Heart right ventricle (tissue), 16 donors: ENCODE measurements at regions of chr20 and their contacts with region 1.

Region 1: DNA sequence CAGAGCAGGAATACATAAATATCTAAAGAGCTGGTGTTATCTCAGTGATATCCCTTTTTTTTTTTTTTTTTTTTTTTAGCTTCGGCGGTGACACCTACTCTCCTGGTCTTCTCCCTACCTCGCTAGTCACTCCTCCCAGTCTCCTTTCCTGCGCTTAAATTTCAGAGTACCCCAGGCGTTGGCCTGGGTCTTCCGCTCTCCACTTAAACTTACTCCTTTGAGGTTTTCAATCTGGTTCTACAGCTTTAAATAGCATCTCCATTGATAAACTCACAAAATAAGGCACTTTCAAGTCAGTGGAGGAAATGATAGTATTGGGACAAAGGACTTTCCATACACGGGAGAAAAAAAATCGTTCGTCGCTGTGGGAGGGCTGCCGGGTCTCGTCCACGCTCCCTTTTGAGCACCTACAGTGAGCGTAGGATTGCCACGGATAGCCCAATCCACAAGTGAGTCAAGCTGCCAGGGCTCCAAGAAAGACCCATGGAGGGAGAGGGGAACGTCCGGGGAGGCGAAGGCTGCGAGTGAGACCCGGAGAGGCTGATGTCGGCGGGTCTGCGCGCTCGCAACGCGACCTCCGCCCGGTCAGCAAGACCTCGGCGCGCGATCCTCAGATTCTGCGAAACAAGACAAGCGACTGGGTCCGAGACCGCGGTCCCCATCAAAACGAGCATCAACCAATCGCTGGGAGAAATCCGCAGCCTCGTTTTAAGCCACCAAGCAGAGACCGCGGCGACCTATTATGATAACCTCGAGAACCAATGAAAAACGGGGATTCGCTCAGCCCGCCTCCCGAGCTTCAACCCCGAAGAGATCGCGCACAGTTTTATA is 672 bp upstream of the SRSF6 start:
- DNase-seq: peak; percentile 79 to 93
- ATAC-seq: peak; percentile 83 to 95 (median 90)
- H3K4me3 ChIP-seq: peak overlapping the region; percentile 73 to 99 (median 92)
- H3K27ac ChIP-seq: peak overlapping the region; percentile 97 to 100 (median 100)
- H3K4me1 ChIP-seq: peaks cover 2 to 41% (median 28%) of the 10 kb centered on the region in 9 donors
- H3K27me3 ChIP-seq: peaks cover 0 to 5% (median 0%) of the 10 kb centered on the region in 7 donors
- CTCF ChIP-seq: no peak

Region 2: DNA sequence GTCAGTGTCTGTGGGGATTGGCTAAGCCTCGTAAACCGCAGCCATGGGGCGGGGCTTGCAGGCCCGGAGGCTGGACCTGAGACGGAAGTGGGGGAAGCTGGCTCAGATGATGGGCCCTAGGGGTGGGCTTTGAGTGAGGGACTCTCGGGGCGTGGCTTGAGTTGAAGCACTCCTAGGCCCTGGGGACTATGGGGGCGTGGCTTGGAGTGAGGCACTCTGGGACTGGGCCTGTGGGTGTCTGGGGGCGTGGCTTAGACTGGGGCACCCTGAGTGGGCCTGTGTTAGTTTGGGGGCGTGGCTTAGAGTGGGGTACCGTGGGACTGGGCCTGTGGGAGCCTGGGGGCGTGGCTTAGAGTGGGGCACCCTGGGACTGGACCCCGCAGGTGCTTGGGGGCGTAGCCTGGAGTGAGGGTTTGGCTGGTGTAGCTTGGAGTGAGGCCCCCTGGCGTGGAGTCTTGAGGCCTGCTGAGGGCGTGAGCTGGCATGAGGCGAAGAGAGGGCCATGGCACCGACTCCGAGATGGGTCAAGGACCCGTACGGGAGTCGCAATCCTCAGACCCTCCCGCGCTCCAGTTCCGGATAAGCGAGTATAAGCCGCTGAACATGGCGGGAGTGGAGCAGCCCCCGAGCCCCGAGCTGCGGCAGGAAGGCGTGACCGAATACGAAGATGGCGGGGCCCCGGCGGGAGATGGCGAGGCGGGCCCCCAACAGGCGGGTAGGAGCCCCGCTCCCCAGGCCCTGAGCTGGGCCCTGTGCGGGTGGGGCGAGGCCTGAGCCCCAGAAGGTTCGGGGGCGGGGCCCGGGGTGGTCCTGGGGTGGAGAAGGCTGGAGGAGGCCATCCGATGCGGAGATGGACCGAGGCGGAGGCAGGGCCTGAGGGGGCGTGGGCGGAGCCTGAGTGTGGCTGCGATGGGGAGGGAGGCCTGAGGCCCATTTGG is 57.3 kb after region 1 on chr20:
- intact Hi-C with region 1: loop called in 2 of 10 experiments (anchors 5 to 10 kb)
- DNase-seq: peak; percentile 93 to 97
- ATAC-seq: peak; percentile 94 to 98 (median 96)
- H3K4me3 ChIP-seq: peak overlapping the region; percentile 3 to 73 (median 64)
- H3K27ac ChIP-seq: peak overlapping the region in 9 of 10 donors; percentile 36 to 78 (median 71)
- H3K4me1 ChIP-seq: peaks cover 0 to 17% (median 8%) of the 10 kb centered on the region in 9 donors
- H3K27me3 ChIP-seq: peaks cover 0 to under 1% (median 0%) of the 10 kb centered on the region in 7 donors
- CTCF ChIP-seq: peak in 5 of 9 donors; percentile 7 to 38 (median 28)

Region 3: DNA sequence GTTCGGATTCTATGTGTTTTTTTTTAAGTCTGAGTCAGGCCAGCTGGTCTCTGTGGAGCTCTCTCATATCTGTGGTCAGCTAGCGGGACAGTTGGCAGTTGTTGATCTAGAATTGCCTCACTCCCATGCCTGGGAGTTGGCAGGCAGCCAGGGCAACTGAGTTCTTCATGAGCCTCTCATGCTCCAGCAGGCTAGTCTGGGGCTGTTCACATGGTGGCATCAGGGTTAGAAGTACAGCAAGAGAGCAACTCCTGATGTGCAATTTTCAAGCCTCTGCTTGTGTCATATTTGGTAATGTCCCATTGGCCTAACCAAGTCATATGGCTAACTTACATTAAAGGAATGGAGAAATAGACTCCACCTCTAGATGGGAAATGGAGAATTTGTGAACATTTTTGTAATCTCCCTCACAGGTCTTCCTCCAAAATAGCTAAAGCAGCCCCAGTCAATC is 127.0 kb after region 1 on chr20:
- intact Hi-C with region 1: loop called in 2 of 10 experiments (anchors 10 kb)
- DNase-seq: peak; percentile 43 to 64
- ATAC-seq: peak in 7 of 8 donors; percentile 33 to 80 (median 64)
- H3K4me3 ChIP-seq: no peak overlapping the region
- H3K27ac ChIP-seq: no peak overlapping the region
- H3K4me1 ChIP-seq: peaks cover 0 to 16% (median 0%) of the 10 kb centered on the region in 9 donors
- H3K27me3 ChIP-seq: no peaks in the 10 kb centered on the region
- CTCF ChIP-seq: no peak

Region 4: DNA sequence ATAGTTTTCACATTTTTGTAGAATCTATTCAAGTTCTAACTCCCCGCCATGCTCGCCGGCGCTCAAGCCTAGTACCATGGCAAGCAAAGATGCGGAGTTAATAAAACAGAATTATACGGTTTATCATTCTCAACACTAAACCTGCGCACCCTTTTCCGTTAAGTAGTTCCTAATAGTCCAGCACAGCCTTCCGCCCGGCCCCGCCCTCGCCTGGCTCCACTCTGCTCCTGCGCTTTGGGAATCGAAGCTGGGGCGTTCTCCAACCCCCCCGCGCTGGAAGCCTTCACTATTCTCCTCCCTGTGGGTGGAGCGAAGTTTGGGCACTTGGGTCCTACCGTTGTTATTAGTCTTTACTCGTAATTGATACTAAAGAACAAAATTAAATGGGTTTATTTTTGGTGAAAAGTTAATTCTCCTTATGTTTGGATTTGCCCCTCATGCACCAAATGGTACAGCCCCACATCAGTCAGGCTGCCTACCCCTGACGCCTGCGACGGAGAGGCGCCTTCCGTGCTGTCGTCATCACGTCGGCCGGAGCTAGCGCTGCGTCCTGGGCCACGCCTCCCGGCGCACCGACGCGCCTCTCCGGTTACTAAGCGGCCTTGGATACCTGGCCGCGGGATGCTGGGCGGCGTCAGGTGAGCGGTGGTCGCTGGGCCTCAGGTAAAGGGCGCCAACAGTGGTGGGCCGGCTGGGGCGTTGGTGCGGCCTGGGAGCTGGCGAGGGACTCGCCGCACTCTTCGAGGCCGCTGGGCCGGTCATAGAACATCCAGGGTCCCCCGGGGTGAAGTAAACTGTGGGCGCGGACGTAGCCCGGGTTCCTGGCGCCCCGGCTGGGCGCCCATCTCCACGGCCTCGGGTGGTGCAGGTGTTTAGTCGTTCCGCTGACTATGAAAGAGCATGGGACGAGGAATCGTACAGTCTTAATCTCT is 133.6 kb after region 1 on chr20 and contains the start of gene IFT52:
- intact Hi-C with region 1: loop called in 5 of 10 experiments (anchors 5 to 10 kb)
- DNase-seq: peak; percentile 92 to 96
- ATAC-seq: peak; percentile 99 to 100 (median 99)
- H3K4me3 ChIP-seq: peak within 1 kb of the TSS; percentile 60 to 97 (median 90)
- H3K27ac ChIP-seq: peak within 1 kb of the TSS; percentile 44 to 92 (median 86)
- H3K4me1 ChIP-seq: peaks cover 0 to 20% (median 13%) of the 10 kb centered on the region in 9 donors
- H3K27me3 ChIP-seq: no peaks in the 10 kb centered on the region
- CTCF ChIP-seq: peak in 3 of 9 donors; percentile 5 to 13 (median 6)
- total RNA-seq, gene IFT52: 5.2 to 8.0 (median 6.8) TPM

Region 5: GRCh38 chr20:44069203-44070011 is 612.4 kb after region 1 on chr20:
- intact Hi-C with region 1: loop called in 1 of 10 experiments (anchors 10 kb)
- DNase-seq: no peak
- ATAC-seq: no peak
- H3K4me3 ChIP-seq: peak overlapping the region in 1 of 10 donors; percentile 27
- H3K27ac ChIP-seq: peak overlapping the region in 2 of 10 donors; percentile 40 to 86
- H3K4me1 ChIP-seq: peaks cover 0 to 48% (median 3%) of the 10 kb centered on the region in 9 donors
- H3K27me3 ChIP-seq: peaks cover 0 to 6% (median 0%) of the 10 kb centered on the region in 7 donors
- CTCF ChIP-seq: no peak